ENCODE measurements at regions of chr15 and their contacts with region 1.

Region 1: GRCh38 chr15:99076552-99077308 is 28.1 kb upstream of the SYNM start:
- DNase-seq: peak in 4 of 5 donors; percentile 48 to 60 (median 54)
- H3K4me3 ChIP-seq: peak overlapping the region; percentile 6 to 32
- H3K4me3 Mint-ChIP-seq: peak overlapping the region; percentile 82 to 95 (median 86)
- H3K27ac ChIP-seq: no peak overlapping the region
- H3K27ac Mint-ChIP-seq: peak overlapping the region in 1 of 7 donors; percentile 89
- H3K4me1 ChIP-seq: peaks cover 6% of the 10 kb centered on the region
- H3K4me1 Mint-ChIP-seq: peaks cover 4 to 6% (median 4%) of the 10 kb centered on the region in 4 donors
- H3K27me3 ChIP-seq: no peaks in the 10 kb centered on the region
- H3K27me3 Mint-ChIP-seq: peaks cover 7 to 10% of the 10 kb centered on the region in 2 donors

Region 2: DNA sequence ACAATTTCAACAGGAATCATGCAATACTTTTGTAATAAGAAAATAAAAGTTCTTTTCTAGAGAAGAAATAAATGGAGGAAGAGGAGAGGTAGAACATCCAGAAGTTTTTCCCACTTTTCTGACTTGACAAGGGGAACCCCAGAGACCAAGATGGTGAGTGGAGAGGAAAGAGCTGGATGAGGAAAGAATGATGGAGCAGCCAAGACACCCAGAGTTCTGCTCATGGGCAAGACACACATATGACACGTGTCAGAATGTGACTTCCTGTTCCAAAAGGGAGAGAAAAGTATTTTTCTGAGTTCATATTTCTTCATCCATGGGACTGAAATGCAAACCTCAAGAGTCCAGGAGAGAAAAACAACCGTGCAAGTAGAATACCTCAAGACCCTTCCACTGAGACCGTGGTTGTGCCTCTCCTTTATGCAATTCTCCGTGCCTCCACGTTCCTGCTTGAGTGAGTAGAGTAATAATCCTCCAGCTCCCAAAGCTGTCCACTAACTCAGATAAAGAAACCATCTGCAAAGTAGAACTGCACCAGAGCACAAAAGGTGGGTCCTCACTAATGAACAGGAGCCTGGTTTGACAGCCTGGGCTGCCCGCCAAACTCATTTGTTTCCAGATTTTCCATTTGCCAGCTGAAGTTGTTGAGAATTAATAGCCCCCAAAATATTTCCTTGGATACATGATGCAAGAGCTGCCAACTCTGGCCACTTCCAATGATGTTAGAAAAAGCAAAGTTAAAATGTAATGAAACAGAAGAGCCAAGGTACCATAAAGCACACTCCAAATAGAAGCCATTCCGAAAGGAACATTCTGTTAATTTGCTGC is 701.0 kb before region 1 on chr15:
- CTCF ChIA-PET with region 1: no interaction called
- POLR2A ChIA-PET with region 1: no interaction called
- intact Hi-C with region 1: no loop called
- DNase-seq: no peak
- H3K4me3 ChIP-seq: no peak overlapping the region
- H3K4me3 Mint-ChIP-seq: no peak overlapping the region
- H3K27ac ChIP-seq: no peak overlapping the region
- H3K27ac Mint-ChIP-seq: no peak overlapping the region
- H3K4me1 ChIP-seq: no peaks in the 10 kb centered on the region
- H3K4me1 Mint-ChIP-seq: no peaks in the 10 kb centered on the region
- H3K27me3 ChIP-seq: no peaks in the 10 kb centered on the region
- H3K27me3 Mint-ChIP-seq: peaks cover 5% of the 10 kb centered on the region in 2 donors

Region 3: DNA sequence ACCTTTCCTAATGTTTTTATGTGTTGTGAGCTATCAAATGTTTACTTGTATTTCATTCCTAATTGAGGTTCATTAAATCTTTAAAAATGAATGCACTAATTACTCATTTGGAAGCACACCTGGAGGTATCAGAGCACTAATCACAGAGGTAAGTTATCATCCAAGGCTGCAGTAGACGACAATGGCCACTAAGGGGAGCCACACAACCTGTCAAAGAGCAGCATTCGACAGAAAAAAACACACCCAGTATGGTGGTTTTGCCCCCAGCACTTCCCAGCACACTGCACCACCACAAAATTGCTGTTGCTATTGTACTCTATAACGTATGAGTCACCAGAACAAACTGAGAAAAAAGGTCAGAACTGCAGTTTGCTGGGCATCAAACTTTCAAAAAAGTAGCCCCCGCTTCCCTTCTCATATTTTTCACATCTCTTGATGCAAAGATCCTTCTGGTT is 634.3 kb before region 1 on chr15:
- CTCF ChIA-PET with region 1: no interaction called
- POLR2A ChIA-PET with region 1: no interaction called
- intact Hi-C with region 1: loop called (anchors 1 kb)
- DNase-seq: peak; percentile 12 to 43 (median 24)
- H3K4me3 ChIP-seq: no peak overlapping the region
- H3K4me3 Mint-ChIP-seq: no peak overlapping the region
- H3K27ac ChIP-seq: no peak overlapping the region
- H3K27ac Mint-ChIP-seq: no peak overlapping the region
- H3K4me1 ChIP-seq: no peaks in the 10 kb centered on the region
- H3K4me1 Mint-ChIP-seq: no peaks in the 10 kb centered on the region
- H3K27me3 ChIP-seq: no peaks in the 10 kb centered on the region
- H3K27me3 Mint-ChIP-seq: peaks cover 6 to 8% of the 10 kb centered on the region in 2 donors

Region 4: DNA sequence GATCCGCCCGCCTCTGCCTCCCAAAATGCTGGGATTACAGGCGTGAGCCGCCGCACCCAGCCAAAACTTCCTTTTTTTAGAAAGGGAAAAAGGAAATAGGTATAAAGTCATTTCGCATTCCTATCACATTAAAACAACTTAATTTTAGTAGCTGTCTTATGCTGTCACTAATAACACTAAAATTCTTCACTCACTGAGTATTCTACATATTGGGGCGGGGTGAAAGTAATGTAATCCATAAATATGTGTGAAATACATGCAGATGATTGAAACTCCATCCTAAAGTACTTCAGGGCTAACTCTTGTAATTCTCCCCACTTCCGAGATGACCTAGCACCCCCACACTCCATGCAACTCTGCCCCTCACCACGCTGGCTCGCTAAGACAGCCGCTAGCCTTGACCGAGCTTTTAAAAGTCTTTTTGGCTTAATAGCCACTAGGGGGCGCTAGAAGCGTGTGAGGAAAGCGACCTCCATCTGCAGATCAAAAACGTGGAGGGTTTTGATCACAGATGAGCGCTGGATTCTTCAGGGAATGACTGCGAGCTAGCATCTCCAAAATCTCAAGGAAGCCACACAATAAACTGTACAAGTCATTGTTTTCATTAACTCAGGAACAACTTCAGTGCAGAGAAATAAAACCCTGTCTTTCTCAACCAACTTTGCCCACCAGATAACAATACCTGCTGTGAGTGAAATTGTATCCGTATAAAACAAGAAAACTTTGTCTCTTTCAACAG is 557.7 kb before region 1 on chr15:
- CTCF ChIA-PET with region 1: interaction called, 4 read pairs
- POLR2A ChIA-PET with region 1: no interaction called
- intact Hi-C with region 1: loop called (anchors 1 kb)
- DNase-seq: peak in 4 of 5 donors; percentile 38 to 50 (median 42)
- H3K4me3 ChIP-seq: no peak overlapping the region
- H3K4me3 Mint-ChIP-seq: no peak overlapping the region
- H3K27ac ChIP-seq: no peak overlapping the region
- H3K27ac Mint-ChIP-seq: peak overlapping the region in 1 of 7 donors; percentile 23
- H3K4me1 ChIP-seq: no peaks in the 10 kb centered on the region
- H3K4me1 Mint-ChIP-seq: peaks cover 0 to 4% (median 0%) of the 10 kb centered on the region in 4 donors
- H3K27me3 ChIP-seq: no peaks in the 10 kb centered on the region
- H3K27me3 Mint-ChIP-seq: peaks cover 0 to 4% of the 10 kb centered on the region in 2 donors

Region 5: GRCh38 chr15:99059010-99059981 is 17.4 kb before region 1 on chr15:
- CTCF ChIA-PET with region 1: interaction called, 66 read pairs
- POLR2A ChIA-PET with region 1: no interaction called
- intact Hi-C with region 1: no loop called
- DNase-seq: peak in 4 of 5 donors; percentile 20 to 38 (median 28)
- H3K4me3 ChIP-seq: peak overlapping the region; percentile 6 to 32
- H3K4me3 Mint-ChIP-seq: peak overlapping the region; percentile 49 to 77 (median 68)
- H3K27ac ChIP-seq: no peak overlapping the region
- H3K27ac Mint-ChIP-seq: no peak overlapping the region
- H3K4me1 ChIP-seq: peaks cover 8% of the 10 kb centered on the region
- H3K4me1 Mint-ChIP-seq: peaks cover 0 to 10% (median 4%) of the 10 kb centered on the region in 4 donors
- H3K27me3 ChIP-seq: peaks cover 6% of the 10 kb centered on the region
- H3K27me3 Mint-ChIP-seq: peaks cover 18 to 44% of the 10 kb centered on the region in 2 donors

Region 6: DNA sequence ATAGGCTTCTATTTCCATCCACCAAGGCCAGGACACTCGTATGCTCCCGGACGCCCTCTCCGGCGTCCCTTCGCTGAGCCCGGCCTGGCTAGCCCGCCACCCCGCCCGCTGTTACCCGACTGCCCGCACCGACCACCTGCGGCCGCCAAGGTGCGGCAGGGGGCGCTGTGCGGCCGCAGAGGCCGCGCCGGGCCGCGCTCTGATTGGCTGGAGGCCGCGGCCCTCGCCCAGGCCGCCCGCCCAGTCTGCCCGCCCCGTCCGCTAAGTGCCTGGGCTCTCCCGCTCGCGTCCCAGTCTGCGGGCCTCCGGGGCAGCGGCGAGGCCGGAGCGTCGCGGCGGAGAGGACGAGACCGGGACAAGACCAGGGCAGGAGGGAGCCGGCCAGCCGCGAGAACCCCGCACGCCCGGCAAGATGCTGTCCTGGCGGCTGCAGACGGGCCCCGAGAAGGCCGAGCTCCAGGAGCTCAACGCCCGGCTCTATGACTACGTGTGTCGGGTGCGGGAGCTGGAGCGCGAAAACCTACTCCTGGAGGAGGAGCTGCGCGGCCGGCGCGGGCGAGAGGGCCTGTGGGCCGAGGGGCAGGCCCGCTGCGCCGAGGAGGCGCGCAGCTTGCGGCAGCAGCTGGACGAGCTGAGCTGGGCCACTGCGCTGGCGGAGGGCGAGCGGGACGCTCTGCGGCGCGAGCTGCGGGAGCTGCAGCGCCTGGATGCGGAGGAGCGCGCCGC is 28.2 kb after region 1 on chr15 and contains the start of gene SYNM:
- CTCF ChIA-PET with region 1: interaction called, 12 read pairs
- POLR2A ChIA-PET with region 1: no interaction called
- intact Hi-C with region 1: no loop called
- DNase-seq: peak in 3 of 5 donors; percentile 13 to 20 (median 16)
- H3K4me3 ChIP-seq: peak within 1 kb of the TSS in 1 of 2 donors; percentile 9
- H3K4me3 Mint-ChIP-seq: peak within 1 kb of the TSS; percentile 54 to 81 (median 60)
- H3K27ac ChIP-seq: no peak within 1 kb of the TSS
- H3K27ac Mint-ChIP-seq: peak within 1 kb of the TSS in 2 of 7 donors; percentile 21 to 65
- H3K4me1 ChIP-seq: peaks cover 10% of the 10 kb centered on the region
- H3K4me1 Mint-ChIP-seq: peaks cover 8 to 37% (median 19%) of the 10 kb centered on the region in 4 donors
- H3K27me3 ChIP-seq: peaks cover 13% of the 10 kb centered on the region
- H3K27me3 Mint-ChIP-seq: peaks cover 20 to 32% of the 10 kb centered on the region in 2 donors
- total RNA-seq, gene SYNM: 13.7 to 14.2 TPM

Region 7: GRCh38 chr15:99110581-99111320 is 34.0 kb after region 1 on chr15:
- CTCF ChIA-PET with region 1: interaction called, 12 read pairs
- POLR2A ChIA-PET with region 1: no interaction called
- intact Hi-C with region 1: no loop called
- DNase-seq: no peak
- H3K4me3 ChIP-seq: no peak overlapping the region
- H3K4me3 Mint-ChIP-seq: peak overlapping the region in 2 of 8 donors; percentile 22 to 61
- H3K27ac ChIP-seq: no peak overlapping the region
- H3K27ac Mint-ChIP-seq: peak overlapping the region in 2 of 7 donors; percentile 17
- H3K4me1 ChIP-seq: peaks cover 10% of the 10 kb centered on the region
- H3K4me1 Mint-ChIP-seq: peaks cover 8 to 41% (median 25%) of the 10 kb centered on the region in 4 donors
- H3K27me3 ChIP-seq: peaks cover 4% of the 10 kb centered on the region
- H3K27me3 Mint-ChIP-seq: peaks cover 9 to 11% of the 10 kb centered on the region in 2 donors

Measured in CD4-positive, alpha-beta memory T cell (primary cell).